K562 (cell line): ENCODE measurements at regions of chr7 and their contacts with region 1.

Region 1: GRCh38 chr7:32846701-32847100 is 44.9 kb downstream of the KBTBD2 start:
- DNase-seq: peak; percentile 66 to 90 (median 70)
- ATAC-seq: peak; percentile 100
- H3K4me3 ChIP-seq: no peak overlapping the region
- H3K27ac ChIP-seq: no peak overlapping the region
- H3K4me1 ChIP-seq: no peaks in the 10 kb centered on the region; a peak in 2 of 5 replicates
- H3K27me3 ChIP-seq: no peaks in the 10 kb centered on the region
- CTCF ChIP-seq: peak; percentile 88 to 96 (median 94)
- EP300 ChIP-seq: peak; percentile 34; the same call in 1 of the 2 replicates
- POLR2A ChIP-seq: no peak
- RAD21 ChIP-seq: peak; percentile 74 to 85

Region 2: DNA sequence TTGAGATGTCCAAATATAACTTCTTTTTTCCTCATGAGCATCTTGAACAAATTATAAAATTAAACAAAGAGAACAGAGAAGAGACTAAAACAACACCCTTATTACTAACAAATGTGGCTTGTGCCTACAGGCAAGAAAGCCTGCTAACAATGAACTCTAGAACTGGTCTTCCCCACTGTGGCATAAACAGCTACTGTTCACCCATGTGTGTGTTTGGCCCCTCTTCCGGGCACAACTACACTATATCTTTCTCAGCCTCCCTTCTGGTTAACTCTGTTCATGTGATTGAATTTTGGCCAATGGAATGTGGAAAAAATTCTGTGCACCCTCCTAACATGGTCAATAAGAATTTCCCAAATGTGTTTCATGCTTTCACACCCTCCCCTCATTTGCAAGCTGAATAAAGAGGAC is 72.2 kb before region 1 on chr7:
- CTCF ChIA-PET with region 1: no interaction called
- POLR2A ChIA-PET with region 1: no interaction called
- in situ Hi-C with region 1: no loop called
- intact Hi-C with region 1: no loop called
- DNase-seq: no peak
- ATAC-seq: no peak
- H3K4me3 ChIP-seq: no peak overlapping the region
- H3K27ac ChIP-seq: no peak overlapping the region
- H3K4me1 ChIP-seq: peaks cover 0 to 8% of the 10 kb centered on the region in 2 experiments; a peak in 2 of 5 replicates
- H3K27me3 ChIP-seq: no peaks in the 10 kb centered on the region
- CTCF ChIP-seq: no peak
- EP300 ChIP-seq: no peak
- POLR2A ChIP-seq: no peak
- RAD21 ChIP-seq: no peak

Region 3: DNA sequence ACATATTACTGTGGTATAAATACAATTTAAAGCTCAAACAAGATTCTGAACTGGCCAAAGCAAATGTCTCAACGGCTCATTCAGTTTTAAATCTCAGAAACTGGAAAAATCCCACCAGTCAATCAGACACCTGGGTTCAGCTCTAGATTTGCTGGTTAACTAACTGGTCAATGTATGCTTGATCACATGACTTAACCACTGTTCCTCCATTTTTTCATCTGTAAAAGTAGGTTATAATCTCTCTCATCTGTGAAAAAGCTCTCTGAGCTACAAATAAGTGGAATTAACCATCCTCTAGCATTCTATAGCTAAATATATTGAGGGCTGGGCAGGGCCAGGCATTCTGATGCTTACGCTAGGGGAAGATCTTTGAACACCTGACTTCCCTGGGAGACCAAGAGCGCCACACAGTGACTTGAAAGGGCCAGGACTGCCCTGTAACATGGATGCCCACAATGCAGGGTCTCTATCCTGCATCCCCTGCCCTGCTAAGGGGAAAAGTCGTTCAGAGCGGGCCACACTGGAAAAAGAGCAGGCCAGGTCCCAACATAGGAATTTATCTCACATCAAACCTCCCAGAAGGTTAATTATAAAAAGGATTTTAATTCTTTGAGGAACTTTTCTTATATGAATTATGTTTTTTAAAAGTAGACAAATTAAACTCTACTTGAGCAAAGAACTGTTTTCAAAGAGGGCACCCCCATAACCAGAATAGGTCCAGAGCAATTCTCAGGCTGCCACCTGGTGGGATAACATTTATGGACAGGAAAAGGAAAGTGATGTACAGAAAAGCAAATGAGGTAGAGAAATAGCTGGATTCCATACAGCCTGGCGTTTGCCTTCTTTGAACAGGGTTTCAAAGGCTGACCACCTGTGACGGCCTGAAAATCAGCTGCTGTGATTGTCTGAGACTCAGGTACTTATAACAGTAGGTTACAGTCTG is 260.7 kb after region 1 on chr7:
- CTCF ChIA-PET with region 1: interaction called, 5 read pairs
- POLR2A ChIA-PET with region 1: no interaction called
- in situ Hi-C with region 1: no loop called
- intact Hi-C with region 1: loop called (anchors 1 kb)
- DNase-seq: peak in 2 of 4 experiments; percentile 28 to 64
- ATAC-seq: peak; percentile 62
- H3K4me3 ChIP-seq: peak overlapping the region; percentile 99
- H3K27ac ChIP-seq: no peak overlapping the region
- H3K4me1 ChIP-seq: peaks cover 10 to 11% of the 10 kb centered on the region in 2 experiments; a peak in 4 of 5 replicates
- H3K27me3 ChIP-seq: no peaks in the 10 kb centered on the region
- CTCF ChIP-seq: peak; percentile 52 to 69 (median 64)
- EP300 ChIP-seq: no peak
- POLR2A ChIP-seq: no peak
- RAD21 ChIP-seq: peak; percentile 66 to 73